ENCODE measurements at regions of chr3 and their contacts with region 1.

Region 1: GRCh38 chr3:196073188-196073838 is 8.6 kb downstream of the TFRC start:
- DNase-seq: peak; percentile 87
- ATAC-seq: peak; percentile 96
- H3K4me3 ChIP-seq: no peak overlapping the region
- H3K4me3 Mint-ChIP-seq: no peak overlapping the region
- H3K27ac ChIP-seq: peak overlapping the region in 1 of 2 donors; percentile 15
- H3K27ac Mint-ChIP-seq: peak overlapping the region; percentile 67
- H3K4me1 ChIP-seq: peaks cover 0 to 10% of the 10 kb centered on the region in 2 donors
- H3K4me1 Mint-ChIP-seq: peaks cover 23% of the 10 kb centered on the region
- H3K27me3 ChIP-seq: no peaks in the 10 kb centered on the region
- H3K27me3 Mint-ChIP-seq: no peaks in the 10 kb centered on the region
- CTCF ChIP-seq: peak; percentile 89

Region 2: GRCh38 chr3:196096382-196096953 is 23.2 kb after region 1 on chr3:
- CTCF ChIA-PET with region 1: interaction called, 19 read pairs
- POLR2A ChIA-PET with region 1: no interaction called
- intact Hi-C with region 1: no loop called
- DNase-seq: peak; percentile 62
- ATAC-seq: peak; percentile 81
- H3K4me3 ChIP-seq: peak overlapping the region in 2 of 5 experiments; percentile 9 to 18
- H3K4me3 Mint-ChIP-seq: peak overlapping the region; percentile 58
- H3K27ac ChIP-seq: peak overlapping the region; percentile 84 to 86
- H3K27ac Mint-ChIP-seq: peak overlapping the region; percentile 90
- H3K4me1 ChIP-seq: peaks cover 52 to 55% of the 10 kb centered on the region in 2 donors
- H3K4me1 Mint-ChIP-seq: peaks cover 34% of the 10 kb centered on the region
- H3K27me3 ChIP-seq: no peaks in the 10 kb centered on the region
- H3K27me3 Mint-ChIP-seq: no peaks in the 10 kb centered on the region
- CTCF ChIP-seq: no peak

Region 3: DNA sequence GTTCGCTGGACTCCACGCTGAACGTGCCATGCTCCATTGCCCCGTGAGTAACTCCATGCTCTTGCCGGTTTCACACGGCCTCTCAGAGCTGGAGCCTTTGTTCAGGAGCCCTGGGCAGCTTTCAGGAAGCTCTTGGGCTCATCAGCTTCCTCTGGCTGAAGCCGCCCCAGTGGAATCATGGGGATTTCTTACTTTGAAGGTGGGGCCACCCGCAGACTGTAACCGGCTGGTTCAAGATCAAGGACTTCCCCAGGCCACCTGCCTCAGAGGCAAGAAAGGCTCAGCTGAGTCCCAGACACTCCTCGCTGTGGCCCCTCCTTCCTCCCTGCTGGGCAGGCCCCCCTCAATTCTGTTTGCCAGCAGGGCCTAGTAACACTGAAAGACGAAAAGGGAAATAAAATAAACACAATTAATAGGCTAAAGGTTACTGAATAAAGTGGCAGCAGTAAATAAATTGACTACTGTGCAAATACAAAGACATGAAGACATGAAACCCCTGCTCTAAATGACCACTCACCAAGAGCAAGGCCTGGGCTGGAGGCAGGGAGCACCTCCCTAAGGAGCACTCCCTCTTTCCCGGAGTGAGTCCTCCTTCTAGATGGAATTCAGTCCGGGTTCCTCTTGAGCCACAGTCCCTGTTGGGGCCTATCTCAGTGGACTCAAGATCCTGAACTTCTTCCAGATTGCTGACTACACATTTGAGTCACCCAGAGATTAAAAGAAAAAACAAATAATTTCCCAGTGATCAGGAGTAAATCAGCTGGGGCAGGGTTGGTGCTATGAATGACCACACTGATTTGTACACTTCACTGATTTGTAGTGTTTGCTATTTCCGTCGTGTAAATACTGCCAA is 86.9 kb after region 1 on chr3:
- CTCF ChIA-PET with region 1: interaction called, 12 read pairs
- POLR2A ChIA-PET with region 1: interaction called, 4 read pairs
- intact Hi-C with region 1: no loop called
- DNase-seq: peak; percentile 90
- ATAC-seq: peak; percentile 99
- H3K4me3 ChIP-seq: no peak overlapping the region
- H3K4me3 Mint-ChIP-seq: peak overlapping the region; percentile 73
- H3K27ac ChIP-seq: peak overlapping the region; percentile 59 to 75
- H3K27ac Mint-ChIP-seq: peak overlapping the region; percentile 94
- H3K4me1 ChIP-seq: peaks cover 13 to 15% of the 10 kb centered on the region in 2 donors
- H3K4me1 Mint-ChIP-seq: peaks cover 21% of the 10 kb centered on the region
- H3K27me3 ChIP-seq: no peaks in the 10 kb centered on the region
- H3K27me3 Mint-ChIP-seq: no peaks in the 10 kb centered on the region
- CTCF ChIP-seq: no peak

Region 4: DNA sequence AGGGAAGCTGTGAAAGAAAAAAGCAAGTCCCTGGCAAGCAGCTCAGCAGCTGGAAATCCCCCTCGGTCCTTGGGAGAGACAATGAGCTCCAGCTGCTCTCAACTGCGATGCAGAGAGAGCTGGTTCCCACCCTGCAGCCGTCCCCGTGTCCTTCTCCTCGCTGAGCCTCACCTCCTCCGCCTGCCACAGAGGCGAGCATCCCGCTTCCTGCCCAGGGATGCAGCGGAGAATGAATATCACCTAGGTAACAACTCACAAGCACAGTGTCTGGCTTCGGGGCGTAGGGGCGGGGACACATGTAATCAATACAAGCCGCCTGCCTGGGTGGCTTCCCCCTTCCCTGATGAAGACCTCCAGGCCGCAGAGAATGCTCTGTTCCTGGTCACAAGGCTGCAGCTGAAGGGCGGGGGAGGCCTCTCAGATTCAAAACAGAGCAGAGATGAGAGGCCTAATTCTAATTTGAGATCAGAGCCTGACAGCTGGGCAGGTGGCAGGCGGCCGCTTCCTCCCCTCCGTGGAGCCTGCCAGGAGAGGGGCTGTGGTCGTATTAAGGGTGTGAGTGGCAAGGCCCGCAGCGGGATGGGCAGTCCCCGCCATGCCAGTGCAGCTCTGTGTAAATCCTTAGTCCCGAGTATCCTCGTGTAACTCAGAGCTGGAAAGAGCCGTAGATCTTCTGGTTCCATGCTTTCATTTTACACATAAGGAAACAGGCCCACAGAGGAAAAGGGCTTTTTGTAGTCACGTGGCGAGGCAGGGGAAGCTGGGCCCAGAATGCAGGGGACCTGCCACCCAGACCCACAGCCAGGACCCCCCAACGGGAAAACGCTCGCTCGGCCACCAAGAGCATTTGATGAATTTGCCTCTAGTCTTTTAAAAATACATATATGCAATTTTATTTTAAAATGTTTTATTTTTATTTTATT is 113.6 kb after region 1 on chr3:
- CTCF ChIA-PET with region 1: interaction called, 467 read pairs
- POLR2A ChIA-PET with region 1: no interaction called
- intact Hi-C with region 1: no loop called
- DNase-seq: peak; percentile 62
- ATAC-seq: peak; percentile 62
- H3K4me3 ChIP-seq: peak overlapping the region in 2 of 5 experiments; percentile 37 to 40
- H3K4me3 Mint-ChIP-seq: peak overlapping the region; percentile 82
- H3K27ac ChIP-seq: peak overlapping the region; percentile 83 to 85
- H3K27ac Mint-ChIP-seq: peak overlapping the region; percentile 96
- H3K4me1 ChIP-seq: peaks cover 20 to 48% of the 10 kb centered on the region in 2 donors
- H3K4me1 Mint-ChIP-seq: peaks cover 37% of the 10 kb centered on the region
- H3K27me3 ChIP-seq: no peaks in the 10 kb centered on the region
- H3K27me3 Mint-ChIP-seq: no peaks in the 10 kb centered on the region
- CTCF ChIP-seq: no peak

Region 5: GRCh38 chr3:196202516-196202970 is 129.2 kb after region 1 on chr3:
- CTCF ChIA-PET with region 1: interaction called, 467 read pairs
- POLR2A ChIA-PET with region 1: interaction called, 3 read pairs
- intact Hi-C with region 1: no loop called
- DNase-seq: peak; percentile 44
- ATAC-seq: peak; percentile 28
- H3K4me3 ChIP-seq: peak overlapping the region in 3 of 5 experiments; percentile 21 to 41 (median 25)
- H3K4me3 Mint-ChIP-seq: peak overlapping the region; percentile 67
- H3K27ac ChIP-seq: no peak overlapping the region
- H3K27ac Mint-ChIP-seq: peak overlapping the region; percentile 60
- H3K4me1 ChIP-seq: peaks cover 26 to 34% of the 10 kb centered on the region in 2 donors
- H3K4me1 Mint-ChIP-seq: peaks cover 37% of the 10 kb centered on the region
- H3K27me3 ChIP-seq: peaks cover 0 to 2% (median 0%) of the 10 kb centered on the region in 4 experiments
- H3K27me3 Mint-ChIP-seq: no peaks in the 10 kb centered on the region
- CTCF ChIP-seq: no peak

Region 6: GRCh38 chr3:196220587-196220986 is 147.3 kb after region 1 on chr3:
- CTCF ChIA-PET with region 1: interaction called, 6 read pairs
- POLR2A ChIA-PET with region 1: interaction called, 11 read pairs
- intact Hi-C with region 1: no loop called
- DNase-seq: no peak
- ATAC-seq: no peak
- H3K4me3 ChIP-seq: no peak overlapping the region
- H3K4me3 Mint-ChIP-seq: no peak overlapping the region
- H3K27ac ChIP-seq: no peak overlapping the region
- H3K27ac Mint-ChIP-seq: no peak overlapping the region
- H3K4me1 ChIP-seq: peaks cover 7 to 15% of the 10 kb centered on the region in 2 donors
- H3K4me1 Mint-ChIP-seq: peaks cover 17% of the 10 kb centered on the region
- H3K27me3 ChIP-seq: no peaks in the 10 kb centered on the region
- H3K27me3 Mint-ChIP-seq: no peaks in the 10 kb centered on the region
- CTCF ChIP-seq: no peak

Measured in B cell (primary cell).